ENCODE measurements at regions of chr3 and their contacts with region 1.

Region 1: DNA sequence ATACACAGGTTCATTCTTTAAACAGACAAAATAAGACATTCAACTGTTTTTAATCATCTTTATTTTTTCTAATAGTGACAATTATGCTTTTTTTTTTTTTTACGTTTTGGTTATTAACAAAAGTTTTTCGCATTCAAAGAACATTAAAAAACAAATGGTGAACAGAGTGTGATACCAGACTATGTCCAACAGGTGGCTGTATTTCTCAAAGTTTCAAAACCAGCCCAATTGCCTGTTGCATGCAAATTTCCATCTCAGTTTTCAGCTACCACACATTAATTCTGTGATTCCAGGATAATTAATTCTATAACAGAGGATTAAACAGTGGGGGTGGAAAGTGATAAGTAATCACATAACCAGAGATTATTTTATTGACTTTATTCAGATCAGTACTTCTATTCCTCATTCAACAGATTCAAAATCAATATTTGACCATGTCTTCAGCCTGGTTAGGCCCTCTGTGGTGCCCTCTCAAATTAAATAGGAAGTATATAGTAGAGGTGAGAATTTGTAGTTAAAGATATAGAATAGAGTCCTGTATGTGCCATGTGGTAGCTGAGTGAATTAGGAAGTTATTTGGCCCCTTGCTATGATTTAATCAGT is 122.2 kb upstream of the DCBLD2 start:
- DNase-seq: no peak
- H3K4me3 ChIP-seq: no peak overlapping the region
- H3K27ac ChIP-seq: no peak overlapping the region
- H3K4me1 ChIP-seq: no peaks in the 10 kb centered on the region
- H3K27me3 ChIP-seq: no peaks in the 10 kb centered on the region
- CTCF ChIP-seq: peak; percentile 37 to 58 (median 50)

Region 2: GRCh38 chr3:99175276-99175812 is 151.7 kb after region 1 on chr3:
- dilution Hi-C with region 1: loop called (anchors 25 kb)
- DNase-seq: no peak
- H3K4me3 ChIP-seq: no peak overlapping the region
- H3K27ac ChIP-seq: no peak overlapping the region
- H3K4me1 ChIP-seq: peaks cover under 1% of the 10 kb centered on the region
- H3K27me3 ChIP-seq: no peaks in the 10 kb centered on the region
- CTCF ChIP-seq: no peak

Region 3: GRCh38 chr3:99753268-99753975 is 729.7 kb after region 1 on chr3:
- dilution Hi-C with region 1: loop called (anchors 25 kb)
- DNase-seq: no peak
- H3K4me3 ChIP-seq: no peak overlapping the region
- H3K27ac ChIP-seq: no peak overlapping the region
- H3K4me1 ChIP-seq: peaks cover 21% of the 10 kb centered on the region
- H3K27me3 ChIP-seq: no peaks in the 10 kb centered on the region
- CTCF ChIP-seq: peak; percentile 70 to 79 (median 75)